ENCODE measurements at regions of chr4 and their contacts with region 1.

Region 1: GRCh38 chr4:38856524-38857337 is at the start of gene TLR6:
- DNase-seq: peak; percentile 60 to 69
- H3K4me3 ChIP-seq: peak within 1 kb of the TSS; percentile 25; the same call in 1 of the 2 replicates
- H3K27ac ChIP-seq: peak within 1 kb of the TSS; percentile 93
- H3K4me1 ChIP-seq: peaks cover 26% of the 10 kb centered on the region
- H3K27me3 ChIP-seq: no peaks in the 10 kb centered on the region
- CTCF ChIP-seq: peak; percentile 83
- total RNA-seq, gene TLR6: 7.9 and 9.3 TPM in 2 replicates

Region 2: GRCh38 chr4:38062088-38062893 is 794.4 kb before region 1 on chr4:
- CTCF ChIA-PET with region 1: no interaction called
- POLR2A ChIA-PET with region 1: no interaction called
- intact Hi-C with region 1: loop called (anchors 10 kb)
- DNase-seq: peak; percentile 58 to 70
- H3K4me3 ChIP-seq: no peak overlapping the region
- H3K27ac ChIP-seq: no peak overlapping the region
- H3K4me1 ChIP-seq: peaks cover 19% of the 10 kb centered on the region
- H3K27me3 ChIP-seq: no peaks in the 10 kb centered on the region
- CTCF ChIP-seq: peak; percentile 90

Region 3: GRCh38 chr4:38663801-38664705 is 192.7 kb before region 1 on chr4 and contains the start of gene KLF3:
- CTCF ChIA-PET with region 1: no interaction called
- POLR2A ChIA-PET with region 1: no interaction called
- intact Hi-C with region 1: loop called (anchors 5 kb)
- DNase-seq: peak; percentile 59 to 92
- H3K4me3 ChIP-seq: peak within 1 kb of the TSS; percentile 72
- H3K27ac ChIP-seq: peak within 1 kb of the TSS; percentile 96
- H3K4me1 ChIP-seq: peaks cover 34% of the 10 kb centered on the region
- H3K27me3 ChIP-seq: no peaks in the 10 kb centered on the region
- CTCF ChIP-seq: no peak
- total RNA-seq, gene KLF3: 33.1 and 37.5 TPM in 2 replicates

Region 4: GRCh38 chr4:38759113-38759789 is 97.5 kb before region 1 on chr4:
- CTCF ChIA-PET with region 1: interaction called, 23 read pairs
- POLR2A ChIA-PET with region 1: interaction called, 10 read pairs
- intact Hi-C with region 1: loop called (anchors 1 kb)
- DNase-seq: peak in 1 of 2 experiments; percentile 36
- H3K4me3 ChIP-seq: no peak overlapping the region
- H3K27ac ChIP-seq: no peak overlapping the region
- H3K4me1 ChIP-seq: no peaks in the 10 kb centered on the region
- H3K27me3 ChIP-seq: no peaks in the 10 kb centered on the region
- CTCF ChIP-seq: peak; percentile 86

Region 5: DNA sequence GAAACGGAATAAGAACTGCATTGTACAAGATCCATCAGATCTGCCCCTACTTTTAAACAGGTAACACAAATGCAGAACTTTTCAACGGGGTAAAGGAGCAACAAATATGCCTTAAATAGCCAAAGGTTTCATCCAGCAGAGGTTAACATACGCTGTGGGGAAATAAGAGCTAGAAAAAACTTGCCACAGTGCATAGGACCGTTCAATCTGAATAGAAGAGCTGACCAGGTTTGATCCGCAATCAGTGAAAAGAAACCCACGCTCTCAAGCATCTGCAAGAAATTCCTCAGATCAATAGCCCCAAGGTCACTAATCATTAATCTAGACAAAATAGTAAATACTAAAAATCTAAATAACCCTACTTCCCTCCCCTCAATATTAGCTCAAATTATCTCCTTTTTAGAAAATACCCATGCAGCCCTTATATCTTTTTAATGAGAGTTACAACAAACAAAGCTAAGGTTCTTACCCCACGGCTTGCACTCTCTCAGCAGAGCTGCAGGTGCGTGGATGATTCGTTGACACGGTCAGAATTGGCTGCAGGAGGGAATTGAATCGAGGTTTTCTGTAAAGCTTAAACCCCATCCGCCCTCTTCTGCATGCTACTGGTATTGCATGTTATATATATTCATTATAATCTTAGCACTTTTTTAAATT is 74.2 kb before region 1 on chr4 and contains the start of gene TLR10:
- CTCF ChIA-PET with region 1: interaction called, 7 read pairs
- POLR2A ChIA-PET with region 1: no interaction called
- intact Hi-C with region 1: loop called (anchors 2 kb)
- DNase-seq: peak in 1 of 2 experiments; percentile 9
- H3K4me3 ChIP-seq: no peak within 1 kb of the TSS
- H3K27ac ChIP-seq: no peak within 1 kb of the TSS
- H3K4me1 ChIP-seq: no peaks in the 10 kb centered on the region
- H3K27me3 ChIP-seq: no peaks in the 10 kb centered on the region
- CTCF ChIP-seq: peak; percentile 75
- total RNA-seq, gene TLR10: not detected in 2 replicates

Region 6: GRCh38 chr4:38804654-38805295 is 52.0 kb before region 1 on chr4 and contains the start of gene TLR1:
- CTCF ChIA-PET with region 1: interaction called, 3 read pairs
- POLR2A ChIA-PET with region 1: no interaction called
- intact Hi-C with region 1: loop called (anchors 5 kb)
- DNase-seq: peak in 1 of 2 experiments; percentile 59
- H3K4me3 ChIP-seq: no peak within 1 kb of the TSS
- H3K27ac ChIP-seq: no peak within 1 kb of the TSS
- H3K4me1 ChIP-seq: no peaks in the 10 kb centered on the region
- H3K27me3 ChIP-seq: no peaks in the 10 kb centered on the region
- CTCF ChIP-seq: peak; percentile 71
- total RNA-seq, gene TLR1: 3.0 and 3.9 TPM in 2 replicates

Measured in PC-9 (cell line).